ENCODE measurements at regions of chr6 and their contacts with region 1.

Region 1: GRCh38 chr6:142692942-142693341 is 252.0 kb downstream of the HIVEP2 start:
- DNase-seq: peak; percentile 55
- H3K27ac ChIP-seq: no peak overlapping the region
- CTCF ChIP-seq: peak; percentile 88

Region 2: DNA sequence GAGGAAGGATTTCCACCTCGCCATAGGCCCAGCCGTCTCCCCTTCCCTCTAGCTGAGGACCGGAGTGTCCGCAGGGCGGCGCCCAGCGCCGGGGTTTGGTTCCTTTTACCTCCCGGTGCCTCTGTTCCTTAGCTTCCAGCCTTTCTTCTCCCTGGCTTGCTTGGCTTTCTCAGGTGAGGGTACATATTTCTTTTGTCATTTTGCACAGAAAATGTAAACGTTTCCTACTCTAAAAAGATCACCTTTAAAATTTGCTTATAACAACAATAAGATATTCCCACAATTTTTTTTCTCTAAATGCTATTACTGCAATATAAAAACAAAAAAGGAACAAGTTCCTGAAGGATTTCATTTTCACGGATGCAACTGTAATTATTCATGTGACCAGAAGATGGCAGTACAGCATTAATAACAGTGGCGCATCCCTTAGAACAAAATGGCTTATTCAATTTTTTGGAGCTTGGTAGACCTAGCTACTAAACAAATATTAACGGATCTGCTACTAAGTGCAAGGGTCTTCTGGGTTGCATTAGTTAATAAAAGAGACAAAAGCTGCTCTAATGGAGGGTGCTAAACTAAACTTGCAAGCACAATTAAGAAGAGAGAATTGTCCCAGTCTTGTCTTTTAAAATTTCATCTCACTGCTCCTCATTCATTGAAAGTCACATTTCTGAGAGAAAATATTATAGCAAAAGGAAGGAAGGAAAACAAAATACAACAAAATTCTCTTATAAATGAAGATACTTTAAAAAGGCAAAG is 218.2 kb before region 1 on chr6:
- CTCF ChIA-PET with region 1: interaction called, 12 read pairs
- POLR2A ChIA-PET with region 1: no interaction called
- DNase-seq: peak; percentile 56
- H3K27ac ChIP-seq: peak overlapping the region; percentile 44; the same call in 1 of the 2 replicates
- CTCF ChIP-seq: peak; percentile 86

Region 3: DNA sequence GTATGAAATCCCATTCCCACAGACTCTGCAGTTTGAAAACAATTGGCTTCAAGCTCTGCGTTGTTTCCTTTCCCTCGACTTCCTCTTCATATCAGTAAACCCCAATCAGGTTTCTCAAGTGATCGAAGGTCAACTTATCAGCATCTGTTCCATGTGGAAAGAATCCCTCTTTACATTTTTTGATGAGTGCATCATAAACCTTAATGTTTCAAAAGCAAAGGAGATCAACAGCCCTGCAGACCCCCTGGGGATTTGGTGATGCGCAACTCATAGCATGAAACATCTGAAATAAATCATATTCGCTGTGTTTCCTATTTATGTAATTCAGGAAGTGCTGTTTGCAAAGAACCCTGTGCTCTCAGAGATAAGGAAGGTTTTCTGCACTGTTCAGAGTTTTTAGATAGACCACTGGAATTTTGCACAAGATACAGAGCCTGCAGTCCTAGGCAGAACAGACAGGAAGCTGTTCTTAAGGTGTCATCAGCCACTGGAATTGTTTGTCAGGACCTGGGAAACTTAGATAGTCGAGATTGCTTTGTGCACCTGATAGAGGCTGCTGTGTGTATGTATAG is 36.1 kb after region 1 on chr6:
- CTCF ChIA-PET with region 1: no interaction called
- POLR2A ChIA-PET with region 1: no interaction called
- DNase-seq: no peak
- H3K27ac ChIP-seq: no peak overlapping the region
- CTCF ChIP-seq: no peak